Activated T-helper 2 cell treated with anti-CD3 and anti-CD28 coated beads, Interferon-gamma antibody, Interleukin-2, Interleukin-4, amounts not matched to agents 10 μg/mL and 5 μg/mL and 100 μg/mL, durations not matched to agents 14 hours and 24 hours and 36 hours (primary cell): ENCODE measurements at regions of chr1 and their contacts with region 1.

Region 1: DNA sequence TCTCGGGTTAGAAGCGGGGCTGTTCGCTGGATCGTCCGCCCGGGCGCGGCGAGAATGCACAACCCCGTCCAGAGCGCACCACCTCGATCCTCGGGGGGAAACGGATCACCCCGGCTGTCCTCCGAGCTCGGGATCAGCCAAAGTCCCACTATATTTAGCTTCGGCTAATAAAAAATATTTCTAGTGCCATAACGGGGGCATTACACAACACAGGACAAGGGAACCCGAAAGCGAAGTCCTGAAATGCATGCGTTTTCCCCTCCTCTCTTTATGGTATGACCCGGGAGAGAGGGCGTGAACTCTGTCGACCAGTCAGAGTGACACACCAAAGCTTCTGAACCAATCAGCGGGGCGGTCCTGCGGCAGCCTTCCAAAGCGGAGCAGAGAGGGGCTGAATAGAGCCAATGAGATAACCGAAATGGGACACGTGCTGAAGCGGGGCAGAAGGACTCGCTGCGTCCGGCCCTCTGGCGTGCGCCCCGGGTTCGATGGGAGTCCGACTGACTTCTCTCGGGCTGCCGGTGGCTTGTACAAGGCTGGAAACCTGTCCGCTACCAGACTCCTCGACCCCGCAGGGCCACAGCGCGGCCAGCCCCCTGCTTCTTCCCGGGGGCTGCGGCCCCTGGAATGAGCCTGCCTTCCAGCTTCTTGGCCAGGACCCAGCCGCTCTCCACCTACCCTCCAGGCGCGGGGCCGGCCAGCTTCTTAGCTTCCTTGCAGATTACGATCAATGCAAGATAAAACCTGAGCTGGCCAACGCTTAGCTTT is at the start of gene ALDH4A1:
- DNase-seq: peak; percentile 93
- H3K4me3 Mint-ChIP-seq: peak within 1 kb of the TSS; percentile 95
- H3K27ac Mint-ChIP-seq: peak within 1 kb of the TSS; percentile 96
- H3K4me1 Mint-ChIP-seq: peaks cover 17% of the 10 kb centered on the region
- H3K27me3 Mint-ChIP-seq: no peaks in the 10 kb centered on the region
- total RNA-seq, gene ALDH4A1: 4.4 and 5.0 TPM in 2 replicates

Region 2: GRCh38 chr1:18949686-18950400 is 47.1 kb after region 1 on chr1:
- intact Hi-C with region 1: loop called (anchors 5 kb)
- DNase-seq: no peak
- H3K4me3 Mint-ChIP-seq: peak overlapping the region; percentile 73
- H3K27ac Mint-ChIP-seq: peak overlapping the region; percentile 96
- H3K4me1 Mint-ChIP-seq: peaks cover 92% of the 10 kb centered on the region
- H3K27me3 Mint-ChIP-seq: no peaks in the 10 kb centered on the region

Region 3: GRCh38 chr1:18972531-18972930 is 69.8 kb after region 1 on chr1:
- intact Hi-C with region 1: loop called (anchors 5 kb)
- DNase-seq: no peak
- H3K4me3 Mint-ChIP-seq: no peak overlapping the region
- H3K27ac Mint-ChIP-seq: no peak overlapping the region
- H3K4me1 Mint-ChIP-seq: peaks cover 2% of the 10 kb centered on the region
- H3K27me3 Mint-ChIP-seq: peaks cover 1% of the 10 kb centered on the region

Region 4: DNA sequence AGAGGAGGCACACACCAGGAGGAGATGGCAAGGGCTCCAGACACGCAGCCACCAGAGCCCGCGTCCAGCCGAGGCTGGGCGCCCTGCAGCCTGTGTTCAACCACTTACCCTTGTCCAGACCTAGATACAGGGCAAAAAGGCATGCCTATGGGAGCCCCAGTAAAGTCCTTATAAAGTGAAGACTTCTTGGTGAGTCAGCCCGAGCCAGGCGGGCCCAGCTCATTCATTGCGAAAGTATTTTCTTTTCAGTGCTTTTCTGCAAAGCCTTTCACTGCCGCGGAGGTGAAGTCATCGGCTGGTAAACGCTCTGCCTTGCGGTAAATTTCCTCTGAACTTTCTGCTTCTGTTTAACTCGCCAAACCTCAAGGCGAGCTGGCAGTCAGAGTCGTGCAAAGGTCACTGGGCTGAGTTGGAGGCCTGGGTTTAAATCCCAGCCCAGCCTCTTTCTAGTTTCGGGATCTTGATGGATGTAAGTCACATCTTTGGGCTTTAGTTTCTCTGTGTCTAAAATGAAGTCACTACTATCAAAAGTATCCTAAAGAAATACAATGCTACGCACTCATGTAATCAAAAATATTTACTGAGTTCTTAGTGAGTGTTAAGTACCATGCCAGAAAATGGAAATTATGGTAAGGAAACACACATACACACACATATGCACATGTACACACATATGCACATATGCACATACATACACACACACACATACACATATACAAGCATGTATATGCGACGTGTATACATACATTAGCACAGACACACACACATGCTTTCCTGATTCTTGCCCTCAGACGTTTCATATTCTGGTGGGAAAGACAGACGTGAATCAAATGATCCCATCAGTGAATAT is 108.5 kb after region 1 on chr1:
- intact Hi-C with region 1: loop called (anchors 5 kb)
- DNase-seq: peak; percentile 76
- H3K4me3 Mint-ChIP-seq: peak overlapping the region; percentile 9
- H3K27ac Mint-ChIP-seq: peak overlapping the region; percentile 89
- H3K4me1 Mint-ChIP-seq: peaks cover 42% of the 10 kb centered on the region
- H3K27me3 Mint-ChIP-seq: no peaks in the 10 kb centered on the region

Region 5: DNA sequence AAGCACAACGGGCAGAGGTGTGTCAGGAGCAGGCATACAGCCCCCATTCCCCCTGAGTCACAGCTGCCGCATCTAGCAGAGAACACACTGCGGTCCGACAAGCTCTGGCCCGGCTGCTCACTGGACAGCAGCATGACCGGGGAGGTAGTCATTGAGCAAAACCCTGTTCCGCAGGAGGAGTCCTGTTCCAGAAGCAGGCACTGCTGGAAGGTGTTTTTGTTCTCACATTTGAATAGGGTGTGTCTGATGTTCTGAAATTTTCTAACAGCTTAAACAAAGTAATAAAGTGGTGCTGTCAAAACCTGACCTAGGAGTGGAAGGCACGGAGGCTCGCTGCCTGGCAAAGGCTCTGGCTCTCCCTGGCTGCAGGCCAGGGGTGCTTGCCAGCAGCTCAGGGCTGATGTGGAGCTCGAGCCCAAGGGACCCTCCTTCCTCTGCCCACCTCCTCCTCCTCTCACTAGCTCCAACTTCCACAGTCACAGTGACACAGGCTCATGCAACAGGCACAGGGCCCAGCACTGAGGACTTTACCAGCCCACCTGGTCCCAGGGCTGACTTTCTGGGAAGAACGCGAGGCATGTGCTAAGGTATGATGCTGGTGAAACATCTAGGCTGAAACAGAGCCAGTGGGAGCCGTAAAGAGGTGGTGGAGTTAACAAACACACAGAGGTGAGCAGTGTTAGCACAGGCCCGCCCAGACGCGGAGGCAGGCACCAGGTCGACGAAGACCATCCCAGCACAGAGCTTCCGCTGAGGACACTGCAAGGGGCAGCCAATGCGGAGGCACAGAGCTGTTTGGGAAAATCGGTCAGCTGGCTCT is 172.4 kb after region 1 on chr1:
- intact Hi-C with region 1: loop called (anchors 2 kb)
- DNase-seq: no peak
- H3K4me3 Mint-ChIP-seq: peak overlapping the region; percentile 3
- H3K27ac Mint-ChIP-seq: peak overlapping the region; percentile 20
- H3K4me1 Mint-ChIP-seq: peaks cover 25% of the 10 kb centered on the region
- H3K27me3 Mint-ChIP-seq: no peaks in the 10 kb centered on the region

Region 6: GRCh38 chr1:19096036-19096833 is 193.5 kb after region 1 on chr1:
- intact Hi-C with region 1: loop called (anchors 5 kb)
- DNase-seq: no peak
- H3K4me3 Mint-ChIP-seq: no peak overlapping the region
- H3K27ac Mint-ChIP-seq: no peak overlapping the region
- H3K4me1 Mint-ChIP-seq: no peaks in the 10 kb centered on the region
- H3K27me3 Mint-ChIP-seq: no peaks in the 10 kb centered on the region

Region 7: GRCh38 chr1:19240673-19241538 is 338.2 kb after region 1 on chr1:
- intact Hi-C with region 1: loop called (anchors 2 kb)
- DNase-seq: peak; percentile 52
- H3K4me3 Mint-ChIP-seq: no peak overlapping the region
- H3K27ac Mint-ChIP-seq: no peak overlapping the region
- H3K4me1 Mint-ChIP-seq: no peaks in the 10 kb centered on the region
- H3K27me3 Mint-ChIP-seq: no peaks in the 10 kb centered on the region